SK-N-SH (cell line): ENCODE measurements at regions of chr1 and their contacts with region 1.

Region 1: DNA sequence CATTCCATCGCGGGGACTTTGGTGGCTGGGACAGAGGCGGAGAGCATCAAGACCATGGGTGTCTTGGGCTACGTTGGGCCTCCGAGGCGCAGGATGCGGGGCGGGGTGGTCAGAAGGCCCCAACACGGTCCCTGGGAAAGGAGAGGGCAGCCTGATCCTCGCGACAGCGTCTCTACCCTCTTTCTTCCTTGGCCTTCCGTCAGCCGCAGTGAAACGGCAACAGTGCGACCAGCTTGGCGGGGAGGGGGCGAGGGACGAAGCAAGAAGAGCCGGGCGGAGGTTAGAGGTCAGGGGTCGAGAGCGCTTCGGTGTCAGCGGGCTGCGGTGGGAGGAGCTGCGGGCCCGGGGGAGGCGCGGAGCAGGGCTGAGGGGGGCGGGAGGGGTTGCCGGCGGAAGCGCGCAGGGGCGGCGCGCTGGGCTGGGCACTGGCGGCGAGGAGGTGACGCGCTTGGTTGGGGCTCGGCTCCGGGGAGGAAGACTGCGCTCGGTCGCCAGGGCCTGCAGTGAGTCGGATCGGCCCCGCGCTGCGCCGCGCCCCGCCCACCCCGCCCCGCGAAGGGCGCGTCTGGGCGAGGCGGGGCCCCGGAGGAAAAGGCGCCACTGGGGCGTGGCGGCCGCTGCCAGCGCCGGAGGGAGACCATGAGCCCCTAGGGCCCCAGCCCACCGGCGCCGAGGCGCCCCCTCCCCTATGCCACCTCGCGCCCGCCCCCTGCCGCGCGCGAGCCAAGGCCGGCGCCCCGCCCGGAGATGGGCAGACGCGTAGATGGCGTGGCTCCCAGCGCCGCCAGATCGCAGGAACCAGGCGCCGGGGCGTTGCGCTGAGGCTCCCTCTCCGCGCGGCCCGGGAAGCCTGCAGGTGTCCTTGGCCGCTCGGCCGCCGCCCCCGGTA is at the start of gene KCNC4:
- DNase-seq: peak; percentile 88
- H3K4me3 ChIP-seq: peak within 1 kb of the TSS; percentile 54
- H3K27ac ChIP-seq: no peak within 1 kb of the TSS; a peak in 1 of 4 replicates
- H3K4me1 ChIP-seq: peaks cover 0 to 57% of the 10 kb centered on the region in 2 experiments; a peak in 2 of 4 replicates
- H3K27me3 ChIP-seq: peaks cover 23% of the 10 kb centered on the region
- CTCF ChIP-seq: no peak
- EP300 ChIP-seq: no peak
- RAD21 ChIP-seq: no peak
- polyA plus RNA-seq, gene KCNC4: 0.37 and 0.51 TPM in 2 replicates

Region 2: GRCh38 chr1:110161877-110162276 is 48.1 kb before region 1 on chr1:
- CTCF ChIA-PET with region 1: interaction called, 10 read pairs
- POLR2A ChIA-PET with region 1: no interaction called
- DNase-seq: no peak
- H3K4me3 ChIP-seq: no peak overlapping the region
- H3K27ac ChIP-seq: no peak overlapping the region
- H3K4me1 ChIP-seq: peaks cover 0 to 38% of the 10 kb centered on the region in 2 experiments; a peak in 2 of 4 replicates
- H3K27me3 ChIP-seq: no peaks in the 10 kb centered on the region; the same call in 1 of the 2 replicates
- CTCF ChIP-seq: no peak
- EP300 ChIP-seq: no peak
- RAD21 ChIP-seq: no peak

Region 3: DNA sequence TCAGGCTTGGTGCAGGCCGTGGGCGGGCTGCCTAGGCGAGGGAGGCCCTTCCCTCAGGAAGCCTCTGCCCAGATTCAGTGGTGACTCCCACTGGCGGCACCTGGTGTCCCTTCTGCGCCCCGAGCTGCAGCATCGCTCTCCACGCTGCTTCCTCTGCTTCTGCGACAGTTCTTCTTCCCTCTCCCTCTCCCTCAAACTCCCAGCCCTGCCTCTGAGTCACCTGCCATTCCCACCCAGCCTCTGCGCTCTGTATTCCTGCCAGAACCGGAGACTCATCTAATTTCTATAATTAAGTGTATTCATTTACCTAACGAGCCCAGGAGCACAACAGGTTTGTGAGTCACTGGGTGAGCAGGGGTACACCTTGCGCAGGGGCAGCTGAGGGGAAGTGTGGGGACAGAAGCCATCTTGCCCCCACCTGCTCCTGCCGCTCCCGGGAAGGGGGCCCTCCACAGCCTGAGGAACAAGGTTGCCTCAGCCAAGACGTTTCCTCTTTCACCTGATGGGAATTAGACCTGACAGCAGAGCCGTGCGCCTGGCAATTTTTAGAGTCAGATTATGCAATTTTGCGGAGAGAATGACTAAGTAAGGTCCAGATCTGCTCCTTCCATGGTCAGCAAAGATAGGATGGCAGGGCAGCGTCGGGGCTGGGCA is 19.5 kb after region 1 on chr1:
- CTCF ChIA-PET with region 1: interaction called, 31 read pairs
- POLR2A ChIA-PET with region 1: no interaction called
- DNase-seq: peak; percentile 43
- H3K4me3 ChIP-seq: no peak overlapping the region
- H3K27ac ChIP-seq: no peak overlapping the region
- H3K4me1 ChIP-seq: peaks cover 0 to 47% of the 10 kb centered on the region in 2 experiments; a peak in 1 of 4 replicates
- H3K27me3 ChIP-seq: no peaks in the 10 kb centered on the region
- CTCF ChIP-seq: no peak
- EP300 ChIP-seq: peak in 1 of 2 experiments; percentile 37; a peak in 1 of 4 replicates
- RAD21 ChIP-seq: no peak

Region 4: GRCh38 chr1:110254996-110255787 is 45.2 kb after region 1 on chr1:
- CTCF ChIA-PET with region 1: interaction called, 22 read pairs
- POLR2A ChIA-PET with region 1: no interaction called
- DNase-seq: no peak
- H3K4me3 ChIP-seq: no peak overlapping the region
- H3K27ac ChIP-seq: no peak overlapping the region
- H3K4me1 ChIP-seq: peaks cover 0 to 36% of the 10 kb centered on the region in 2 experiments; a peak in 1 of 4 replicates
- H3K27me3 ChIP-seq: peaks cover 4% of the 10 kb centered on the region; the same call in 1 of the 2 replicates
- CTCF ChIP-seq: no peak
- EP300 ChIP-seq: no peak
- RAD21 ChIP-seq: no peak

Region 5: DNA sequence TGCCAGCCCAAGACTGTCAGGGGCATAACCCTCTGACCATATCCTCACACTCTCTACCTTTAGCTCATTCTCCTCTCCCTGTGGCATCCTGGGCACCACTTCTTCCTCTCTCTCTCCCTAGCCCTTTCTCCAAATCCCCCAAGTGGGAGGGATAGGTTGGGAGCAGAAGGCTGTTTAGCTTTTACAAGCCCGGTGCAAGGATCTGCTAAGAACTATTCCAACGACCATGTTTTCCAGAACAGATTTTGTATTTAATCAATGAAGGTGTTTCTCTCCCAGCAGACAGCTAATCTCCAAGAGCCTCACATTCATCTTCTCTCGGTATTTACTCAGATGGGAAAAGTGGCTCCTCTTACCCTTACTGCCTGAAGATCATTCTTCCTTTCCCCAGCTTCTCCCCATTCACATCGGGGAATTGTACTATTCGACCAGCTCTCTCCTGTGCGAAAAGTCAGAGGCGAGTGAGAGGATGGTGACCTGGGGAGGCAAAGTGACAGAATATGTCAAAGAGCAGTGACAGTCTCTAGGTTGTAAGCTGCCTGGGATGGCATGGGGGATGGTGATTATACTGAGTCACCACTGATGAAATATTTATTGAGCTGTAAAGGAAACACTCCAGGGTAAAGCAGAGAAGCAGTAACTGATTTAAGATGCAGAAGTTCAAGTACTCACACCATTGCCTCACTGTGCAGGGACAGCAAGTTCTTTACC is 82.2 kb after region 1 on chr1:
- CTCF ChIA-PET with region 1: interaction called, 1,300 read pairs
- POLR2A ChIA-PET with region 1: no interaction called
- DNase-seq: no peak
- H3K4me3 ChIP-seq: no peak overlapping the region
- H3K27ac ChIP-seq: no peak overlapping the region
- H3K4me1 ChIP-seq: no peaks in the 10 kb centered on the region; a peak in 2 of 4 replicates
- H3K27me3 ChIP-seq: 0 out of 2 replicates have a peak, but pooled peaks cover 5% of the 10 kb centered on the region
- CTCF ChIP-seq: no peak
- EP300 ChIP-seq: no peak
- RAD21 ChIP-seq: no peak

Region 6: DNA sequence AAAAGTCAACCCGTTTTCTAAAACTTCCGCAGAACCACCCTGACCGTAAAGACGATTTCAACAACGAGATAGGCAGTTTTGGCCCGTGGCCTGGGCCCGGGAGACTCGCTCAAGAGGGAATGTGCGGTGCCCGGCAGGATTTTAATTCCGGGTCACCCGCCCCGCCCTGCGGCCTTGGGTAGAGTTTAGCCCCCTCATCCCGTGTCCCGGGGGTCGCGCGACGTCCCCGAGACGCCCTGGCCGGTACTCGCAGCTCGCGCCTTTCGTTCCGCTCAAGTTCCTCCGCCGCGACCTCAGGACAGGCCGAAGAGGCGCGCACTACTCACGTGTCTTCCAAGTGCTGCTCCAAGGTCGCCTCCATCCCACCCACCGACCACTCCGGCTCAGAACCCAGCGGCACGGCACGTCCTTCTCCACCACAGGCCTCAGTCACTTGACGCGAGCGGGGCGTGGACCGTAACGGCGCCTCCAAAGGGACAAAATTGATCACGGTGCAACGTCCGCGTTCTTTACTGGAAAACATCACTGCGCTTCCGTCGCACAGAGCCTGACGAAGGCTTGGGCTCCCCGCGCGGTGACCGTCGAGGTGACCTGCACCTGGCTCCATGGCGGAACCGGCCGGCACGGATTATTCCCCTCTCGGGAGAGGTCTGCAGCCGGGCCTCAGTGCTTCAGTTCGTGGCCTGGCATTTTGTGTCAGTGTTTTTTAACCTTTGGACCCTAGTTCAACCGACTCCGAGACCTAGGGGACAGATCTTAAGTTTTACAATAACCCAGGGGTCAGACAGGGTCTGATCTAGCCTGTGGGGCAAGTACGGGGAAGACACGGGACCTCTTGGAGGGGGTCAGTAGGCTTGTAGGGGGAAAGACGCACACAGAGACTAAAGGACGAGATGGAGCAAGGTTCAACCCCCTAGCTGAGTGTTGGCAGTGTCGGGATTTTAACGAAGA is 197.6 kb after region 1 on chr1 and contains the start of gene LAMTOR5:
- CTCF ChIA-PET with region 1: interaction called, 48 read pairs
- POLR2A ChIA-PET with region 1: no interaction called
- DNase-seq: peak; percentile 87
- H3K4me3 ChIP-seq: peak within 1 kb of the TSS; percentile 75 to 99
- H3K27ac ChIP-seq: peak within 1 kb of the TSS; percentile 62 to 80
- H3K4me1 ChIP-seq: peaks cover 6 to 15% of the 10 kb centered on the region in 2 experiments; a peak in 3 of 4 replicates
- H3K27me3 ChIP-seq: no peaks in the 10 kb centered on the region
- CTCF ChIP-seq: no peak; the same call in 1 of the 2 replicates
- EP300 ChIP-seq: 0 out of 4 replicates have a peak, but pooled peaks of 1 of the 2 experiments have one; percentile 31
- RAD21 ChIP-seq: peak; percentile 9; the same call in 1 of the 2 replicates
- polyA plus RNA-seq, gene LAMTOR5: 442 and 636 TPM in 2 replicates